Thyroid gland (tissue), 4 donors: ENCODE measurements at regions of chr12 and their contacts with region 1.

Region 1: DNA sequence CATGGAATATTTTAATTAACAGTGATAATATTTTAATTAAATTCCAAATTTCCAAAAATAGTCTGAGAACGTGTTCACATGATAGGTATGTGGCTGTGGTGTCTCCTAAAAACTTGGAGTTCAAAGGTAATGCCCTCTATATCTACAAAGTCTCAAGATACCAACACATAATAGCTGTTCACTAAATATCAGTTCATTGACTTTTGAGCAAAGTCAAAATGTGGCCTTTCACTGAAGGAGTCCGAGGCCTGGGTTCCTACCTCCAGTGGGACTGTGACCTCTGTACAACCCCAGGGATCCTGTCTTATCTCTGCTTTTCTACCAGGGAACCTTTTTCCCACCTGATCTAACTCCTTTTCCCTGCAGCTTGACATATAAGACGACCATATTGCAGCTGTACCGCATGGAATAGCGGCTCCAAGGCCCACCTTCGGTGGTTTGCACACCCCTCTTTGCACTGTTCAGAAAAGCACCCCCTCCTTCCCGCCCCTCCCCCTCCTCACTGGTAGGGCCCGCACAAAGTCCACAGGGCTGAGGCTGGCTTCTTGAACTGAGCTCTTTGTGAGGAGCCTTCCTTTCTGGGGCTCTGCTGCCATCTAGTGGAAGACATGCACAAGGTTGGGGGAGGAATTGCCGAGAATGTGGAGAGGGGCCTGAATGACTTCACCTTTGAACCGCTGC is 3.1 kb downstream of the CCND2 start:
- DNase-seq: peak; percentile 94
- H3K4me3 ChIP-seq: no peak overlapping the region
- H3K27ac ChIP-seq: peak overlapping the region in 2 of 3 donors; percentile 94 to 97
- H3K4me1 ChIP-seq: peaks cover 45 to 59% of the 10 kb centered on the region in 2 donors
- H3K27me3 ChIP-seq: no peaks in the 10 kb centered on the region
- CTCF ChIP-seq: peak; percentile 85 to 99 (median 96)
- POLR2A ChIP-seq: peak in 1 of 2 donors; percentile 35

Region 2: GRCh38 chr12:3073438-3074250 is 1203.0 kb before region 1 on chr12:
- intact Hi-C with region 1: loop called (anchors 5 kb)
- DNase-seq: peak; percentile 80 to 89
- H3K4me3 ChIP-seq: no peak overlapping the region
- H3K27ac ChIP-seq: no peak overlapping the region
- H3K4me1 ChIP-seq: peaks cover 28 to 38% of the 10 kb centered on the region in 2 donors
- H3K27me3 ChIP-seq: no peaks in the 10 kb centered on the region
- CTCF ChIP-seq: peak; percentile 79 to 97 (median 91)
- POLR2A ChIP-seq: no peak

Region 3: DNA sequence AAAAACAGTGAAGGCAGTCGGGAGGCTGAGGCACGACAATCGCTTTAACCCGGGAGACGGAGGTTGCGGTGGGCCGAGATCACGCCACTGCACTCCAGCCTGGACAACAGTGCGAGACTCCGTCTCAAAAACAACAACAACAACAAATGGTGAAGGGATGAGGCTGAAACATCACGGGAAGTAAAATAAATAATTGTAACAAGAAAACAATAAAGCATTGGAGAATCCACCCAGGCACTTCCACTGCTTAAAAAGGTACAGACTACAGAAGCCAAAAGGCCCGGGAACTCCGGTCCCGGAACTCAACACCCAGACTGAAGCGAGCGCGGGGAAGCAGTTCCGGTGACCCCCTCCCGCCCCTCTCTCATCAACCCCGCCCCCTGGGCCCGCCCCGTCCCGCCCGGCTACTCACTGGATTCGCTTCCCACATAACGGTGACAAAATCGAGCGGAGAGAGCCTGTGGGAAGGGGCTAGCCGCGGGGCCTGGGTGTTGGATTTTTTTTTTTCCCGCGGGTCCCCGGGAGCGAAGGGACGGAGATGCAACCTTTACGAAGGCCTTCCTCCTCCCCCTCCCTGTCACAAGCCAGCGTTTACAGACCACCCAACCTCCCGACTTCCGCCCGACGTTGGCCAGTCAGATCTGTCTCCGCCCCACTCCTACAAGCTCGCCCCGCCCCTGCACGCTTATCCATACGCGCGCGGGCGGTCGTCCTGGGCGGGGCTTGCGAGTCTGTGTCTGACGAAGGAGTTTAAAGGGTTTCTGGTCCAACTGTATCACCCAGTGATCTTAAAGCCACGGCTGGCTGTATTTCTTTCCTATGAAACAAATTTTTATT is 403.6 kb before region 1 on chr12 and contains the start of gene PARP11:
- intact Hi-C with region 1: loop called (anchors 5 kb)
- DNase-seq: peak; percentile 98 to 99
- H3K4me3 ChIP-seq: peak within 1 kb of the TSS; percentile 42 to 75 (median 72)
- H3K27ac ChIP-seq: peak within 1 kb of the TSS; percentile 89 to 92 (median 89)
- H3K4me1 ChIP-seq: peaks cover 13 to 15% of the 10 kb centered on the region in 2 donors
- H3K27me3 ChIP-seq: no peaks in the 10 kb centered on the region
- CTCF ChIP-seq: no peak
- POLR2A ChIP-seq: peak in 1 of 2 donors; percentile 74
- total RNA-seq, gene PARP11: 8.7 to 26.2 (median 15.4) TPM

Region 4: GRCh38 chr12:3998968-3999826 is 277.5 kb before region 1 on chr12:
- intact Hi-C with region 1: loop called (anchors 5 kb)
- DNase-seq: peak; percentile 77 to 87
- H3K4me3 ChIP-seq: no peak overlapping the region
- H3K27ac ChIP-seq: peak overlapping the region; percentile 79 to 93 (median 90)
- H3K4me1 ChIP-seq: peaks cover 14 to 17% of the 10 kb centered on the region in 2 donors
- H3K27me3 ChIP-seq: no peaks in the 10 kb centered on the region
- CTCF ChIP-seq: no peak
- POLR2A ChIP-seq: peak in 1 of 2 donors; percentile 38

Region 5: GRCh38 chr12:4037747-4038312 is 238.8 kb before region 1 on chr12:
- intact Hi-C with region 1: loop called (anchors 5 kb)
- DNase-seq: peak; percentile 58 to 62
- H3K4me3 ChIP-seq: no peak overlapping the region
- H3K27ac ChIP-seq: no peak overlapping the region
- H3K4me1 ChIP-seq: peaks cover 0 to 5% of the 10 kb centered on the region in 2 donors
- H3K27me3 ChIP-seq: no peaks in the 10 kb centered on the region
- CTCF ChIP-seq: peak; percentile 52 to 89 (median 73)
- POLR2A ChIP-seq: no peak

Region 6: GRCh38 chr12:4107436-4107878 is 169.2 kb before region 1 on chr12:
- intact Hi-C with region 1: loop called (anchors 5 kb)
- DNase-seq: peak; percentile 55 to 60
- H3K4me3 ChIP-seq: no peak overlapping the region
- H3K27ac ChIP-seq: no peak overlapping the region
- H3K4me1 ChIP-seq: no peaks in the 10 kb centered on the region
- H3K27me3 ChIP-seq: peaks cover 4% of the 10 kb centered on the region
- CTCF ChIP-seq: peak in 5 of 6 experiments; percentile 39 to 64 (median 56)
- POLR2A ChIP-seq: no peak